Right lobe of liver (tissue), 6 donors: ENCODE measurements at regions of chr7 and their contacts with region 1.

Region 1: GRCh38 chr7:5083311-5083711 is 37.7 kb downstream of the RBAK start:
- DNase-seq: no peak
- ATAC-seq: no peak
- H3K4me3 ChIP-seq: no peak overlapping the region
- H3K27ac ChIP-seq: no peak overlapping the region
- H3K4me1 ChIP-seq: no peaks in the 10 kb centered on the region
- H3K27me3 ChIP-seq: no peaks in the 10 kb centered on the region
- CTCF ChIP-seq: no peak
- POLR2A ChIP-seq: no peak

Region 2: DNA sequence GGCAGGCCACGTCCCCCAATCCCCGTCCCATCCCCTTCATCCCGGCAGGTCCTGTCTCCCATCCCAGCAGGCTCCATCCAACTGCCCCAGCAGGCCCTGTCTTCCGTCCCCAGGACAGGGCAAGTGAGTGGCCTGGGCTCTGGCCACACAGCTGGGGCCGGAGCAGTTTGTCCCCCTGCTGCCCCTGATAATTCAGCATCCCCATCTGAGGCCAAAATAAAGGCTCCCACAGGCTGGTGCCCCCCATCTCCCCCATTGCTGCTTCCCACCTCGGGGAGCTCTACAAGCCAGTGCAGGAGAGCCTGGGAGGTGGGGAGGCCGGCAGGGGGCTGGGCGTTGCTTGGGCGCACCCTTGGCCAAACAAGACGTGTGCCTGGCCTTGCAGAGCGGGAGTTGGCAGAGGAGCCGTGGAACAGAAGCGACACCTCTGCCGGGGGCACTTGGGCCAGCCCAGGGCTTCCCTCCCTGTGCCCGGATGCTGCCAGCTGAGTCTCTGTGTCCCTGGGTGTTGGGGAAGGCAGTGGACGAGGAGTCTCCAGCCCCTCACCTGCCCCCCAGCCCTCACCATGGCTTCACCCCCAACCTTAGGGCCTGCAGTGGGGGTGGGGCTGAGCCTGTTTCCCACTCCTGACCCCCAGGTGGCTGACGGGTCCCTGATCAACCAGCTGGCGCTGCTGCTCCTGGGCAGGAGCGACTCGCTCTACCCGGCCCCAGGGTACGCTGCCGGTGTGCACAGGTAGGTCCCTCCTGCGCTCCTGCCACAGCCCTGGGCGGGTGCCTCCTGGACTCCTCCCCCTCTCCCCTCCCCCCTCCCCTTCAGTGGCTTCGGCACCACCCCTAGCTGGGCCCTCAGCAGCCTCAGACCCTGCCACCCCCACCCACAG is 293.9 kb before region 1 on chr7:
- intact Hi-C with region 1: no loop called
- DNase-seq: no peak
- ATAC-seq: no peak
- H3K4me3 ChIP-seq: no peak overlapping the region
- H3K27ac ChIP-seq: no peak overlapping the region
- H3K4me1 ChIP-seq: no peaks in the 10 kb centered on the region
- H3K27me3 ChIP-seq: no peaks in the 10 kb centered on the region
- CTCF ChIP-seq: no peak
- POLR2A ChIP-seq: no peak

Region 3: DNA sequence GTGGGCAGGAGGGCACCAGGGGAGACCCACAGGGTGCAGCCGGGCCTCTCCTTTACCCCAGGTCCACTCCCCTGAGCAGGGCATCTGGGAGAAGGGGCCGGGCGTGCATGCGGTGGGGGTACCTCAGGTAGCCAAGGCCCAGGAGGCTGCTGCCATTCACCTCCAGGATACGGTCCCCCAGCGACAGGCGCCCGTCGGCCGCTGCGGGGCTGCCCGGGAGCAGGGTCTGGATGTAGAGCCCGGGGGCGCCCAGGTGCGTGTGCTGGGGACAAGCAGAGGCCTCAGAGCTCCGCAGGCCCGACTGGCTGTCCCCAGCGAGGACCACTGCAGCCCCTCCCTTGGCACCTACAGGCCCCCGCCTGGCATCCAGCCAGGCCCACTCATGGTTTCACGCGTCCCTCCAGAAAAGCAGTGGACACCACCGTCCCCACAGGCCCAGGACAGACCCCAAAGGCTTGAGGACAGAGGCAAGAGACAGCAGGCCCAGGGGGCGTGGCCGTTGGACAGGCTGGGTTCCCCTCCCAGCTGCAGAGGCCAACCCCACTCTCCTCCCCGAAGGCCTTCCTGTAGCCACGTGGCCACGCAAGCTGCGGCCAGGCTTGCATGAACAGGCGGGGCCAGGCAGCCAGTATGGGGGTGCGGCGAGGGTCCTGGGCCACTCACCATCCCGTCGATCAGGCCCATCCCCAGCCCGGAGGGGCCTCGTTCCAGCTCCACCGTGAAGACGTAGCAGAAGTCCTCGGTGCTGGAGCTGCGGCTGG is 283.6 kb before region 1 on chr7:
- intact Hi-C with region 1: loop called (anchors 5 to 10 kb)
- DNase-seq: no peak
- ATAC-seq: no peak
- H3K4me3 ChIP-seq: no peak overlapping the region
- H3K27ac ChIP-seq: no peak overlapping the region
- H3K4me1 ChIP-seq: no peaks in the 10 kb centered on the region
- H3K27me3 ChIP-seq: no peaks in the 10 kb centered on the region
- CTCF ChIP-seq: no peak
- POLR2A ChIP-seq: no peak

Region 4: GRCh38 chr7:4809091-4809591 is 274.2 kb before region 1 on chr7:
- intact Hi-C with region 1: loop called (anchors 5 to 10 kb)
- DNase-seq: peak in 2 of 3 donors; percentile 42 to 55
- ATAC-seq: peak in 2 of 4 donors; percentile 23 to 40
- H3K4me3 ChIP-seq: no peak overlapping the region
- H3K27ac ChIP-seq: no peak overlapping the region
- H3K4me1 ChIP-seq: no peaks in the 10 kb centered on the region
- H3K27me3 ChIP-seq: no peaks in the 10 kb centered on the region
- CTCF ChIP-seq: no peak
- POLR2A ChIP-seq: no peak

Region 5: DNA sequence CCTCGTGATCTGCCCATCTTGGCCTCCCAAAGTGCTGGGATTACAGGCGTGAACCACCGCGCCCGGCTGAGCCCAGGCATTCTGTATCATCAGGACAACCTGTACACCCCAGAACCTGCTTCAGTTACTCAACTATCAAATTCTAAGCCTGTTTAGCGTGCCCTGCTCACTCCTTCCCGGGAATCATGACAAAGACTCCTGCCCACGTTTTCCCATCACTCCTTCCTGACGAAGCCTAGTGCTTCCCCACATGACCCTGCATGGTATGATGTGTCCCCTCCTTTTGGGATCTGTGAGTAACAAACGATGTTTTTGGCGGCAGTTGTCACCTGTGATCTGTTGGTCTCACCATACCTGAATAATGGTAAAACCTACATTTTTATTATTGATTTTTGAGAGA is 187.5 kb before region 1 on chr7:
- intact Hi-C with region 1: no loop called
- DNase-seq: no peak
- ATAC-seq: no peak
- H3K4me3 ChIP-seq: no peak overlapping the region
- H3K27ac ChIP-seq: no peak overlapping the region
- H3K4me1 ChIP-seq: no peaks in the 10 kb centered on the region
- H3K27me3 ChIP-seq: no peaks in the 10 kb centered on the region
- CTCF ChIP-seq: no peak
- POLR2A ChIP-seq: no peak

Region 6: GRCh38 chr7:4939971-4940728 is 143.2 kb before region 1 on chr7:
- intact Hi-C with region 1: no loop called
- DNase-seq: no peak
- ATAC-seq: peak in 1 of 4 donors; percentile 22
- H3K4me3 ChIP-seq: no peak overlapping the region
- H3K27ac ChIP-seq: no peak overlapping the region
- H3K4me1 ChIP-seq: no peaks in the 10 kb centered on the region
- H3K27me3 ChIP-seq: no peaks in the 10 kb centered on the region
- CTCF ChIP-seq: no peak
- POLR2A ChIP-seq: no peak